ENCODE measurements at regions of chr6 and their contacts with region 1.

Region 1: GRCh38 chr6:73732845-73733675 is 37.1 kb downstream of the CD109 start:
- DNase-seq: peak; percentile 54
- H3K4me3 ChIP-seq: peak overlapping the region in 1 of 2 experiments; percentile 13; a peak in 1 of 4 replicates
- H3K27ac ChIP-seq: no peak overlapping the region
- H3K4me1 ChIP-seq: peaks cover 0 to 1% of the 10 kb centered on the region in 2 experiments; a peak in 1 of 4 replicates
- H3K27me3 ChIP-seq: no peaks in the 10 kb centered on the region
- CTCF ChIP-seq: peak; percentile 94
- EP300 ChIP-seq: no peak
- RAD21 ChIP-seq: peak; percentile 71

Region 2: GRCh38 chr6:73579851-73580246 is 153.2 kb before region 1 on chr6:
- CTCF ChIA-PET with region 1: no interaction called
- POLR2A ChIA-PET with region 1: no interaction called
- DNase-seq: no peak
- H3K4me3 ChIP-seq: peak overlapping the region in 1 of 2 experiments; percentile 21; a peak in 2 of 4 replicates
- H3K27ac ChIP-seq: peak overlapping the region; percentile 79 to 99; a peak in 3 of 4 replicates
- H3K4me1 ChIP-seq: peaks cover 4 to 19% of the 10 kb centered on the region in 2 experiments; a peak in 3 of 4 replicates
- H3K27me3 ChIP-seq: no peaks in the 10 kb centered on the region
- CTCF ChIP-seq: no peak
- EP300 ChIP-seq: no peak
- RAD21 ChIP-seq: no peak

Region 3: DNA sequence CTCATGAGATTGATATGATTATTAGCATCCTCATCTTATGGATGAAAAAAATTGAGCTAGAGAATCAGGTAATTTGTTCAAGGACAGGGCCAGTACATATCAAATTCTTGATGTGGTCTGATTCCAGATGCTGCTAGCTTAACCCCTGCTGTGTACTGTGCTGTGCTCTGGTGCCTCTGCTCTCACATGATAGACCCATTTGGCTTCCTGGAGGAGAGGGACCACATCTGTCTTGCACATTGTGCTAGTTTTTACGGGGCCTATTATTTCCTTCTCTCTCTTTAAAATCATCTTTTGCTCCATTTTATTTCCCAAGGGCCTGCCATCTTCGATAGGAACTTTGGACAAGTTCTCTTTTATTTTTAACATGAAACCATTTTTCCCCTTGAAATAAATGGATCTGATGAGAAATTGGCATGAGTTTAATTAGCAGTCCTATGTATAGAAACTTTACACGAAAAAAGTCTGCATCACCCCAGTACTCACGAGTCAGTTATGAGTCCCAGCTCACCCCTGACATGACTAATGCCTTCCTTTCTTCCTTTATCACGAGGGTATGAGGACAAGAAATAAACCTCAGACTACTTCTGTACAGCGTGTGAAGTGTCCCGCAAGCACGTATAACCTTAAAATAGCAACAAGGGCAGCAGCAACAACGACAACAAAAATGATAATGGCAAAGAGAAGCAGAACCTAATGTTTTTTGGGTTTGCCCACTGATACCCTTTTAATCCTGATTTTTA is 10.6 kb before region 1 on chr6:
- CTCF ChIA-PET with region 1: interaction called, 12 read pairs
- POLR2A ChIA-PET with region 1: no interaction called
- DNase-seq: no peak
- H3K4me3 ChIP-seq: no peak overlapping the region
- H3K27ac ChIP-seq: peak overlapping the region; percentile 70 to 81; a peak in 3 of 4 replicates
- H3K4me1 ChIP-seq: peaks cover 0 to 10% of the 10 kb centered on the region in 2 experiments; a peak in 1 of 4 replicates
- H3K27me3 ChIP-seq: no peaks in the 10 kb centered on the region
- CTCF ChIP-seq: no peak
- EP300 ChIP-seq: no peak
- RAD21 ChIP-seq: no peak

Region 4: DNA sequence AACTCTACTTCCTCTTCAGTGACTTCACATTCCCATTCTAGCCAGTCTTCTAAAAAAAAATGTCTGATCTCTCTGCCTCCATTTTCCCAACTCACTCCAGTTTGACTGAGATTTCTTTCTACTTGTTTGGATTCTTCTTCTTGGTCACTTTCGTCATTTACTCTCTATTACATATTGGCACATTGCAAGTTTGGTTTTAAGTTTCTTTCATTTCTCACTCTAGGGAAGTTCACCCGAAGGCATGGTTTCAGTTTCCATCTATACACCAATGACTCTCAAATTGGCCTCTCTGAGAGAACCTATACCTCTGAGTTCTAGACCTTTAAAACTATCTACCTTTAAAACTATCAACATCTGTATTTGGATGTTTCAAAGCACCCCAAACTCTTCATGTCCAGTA is 14.2 kb after region 1 on chr6:
- CTCF ChIA-PET with region 1: interaction called, 17 read pairs
- POLR2A ChIA-PET with region 1: no interaction called
- DNase-seq: no peak
- H3K4me3 ChIP-seq: no peak overlapping the region
- H3K27ac ChIP-seq: no peak overlapping the region; a peak in 1 of 4 replicates
- H3K4me1 ChIP-seq: peaks cover 0 to 12% of the 10 kb centered on the region in 2 experiments; a peak in 1 of 4 replicates
- H3K27me3 ChIP-seq: no peaks in the 10 kb centered on the region
- CTCF ChIP-seq: no peak
- EP300 ChIP-seq: no peak
- RAD21 ChIP-seq: no peak

Measured in SK-N-SH (cell line).